ENCODE measurements at regions of chr16 and their contacts with region 1.

Region 1: DNA sequence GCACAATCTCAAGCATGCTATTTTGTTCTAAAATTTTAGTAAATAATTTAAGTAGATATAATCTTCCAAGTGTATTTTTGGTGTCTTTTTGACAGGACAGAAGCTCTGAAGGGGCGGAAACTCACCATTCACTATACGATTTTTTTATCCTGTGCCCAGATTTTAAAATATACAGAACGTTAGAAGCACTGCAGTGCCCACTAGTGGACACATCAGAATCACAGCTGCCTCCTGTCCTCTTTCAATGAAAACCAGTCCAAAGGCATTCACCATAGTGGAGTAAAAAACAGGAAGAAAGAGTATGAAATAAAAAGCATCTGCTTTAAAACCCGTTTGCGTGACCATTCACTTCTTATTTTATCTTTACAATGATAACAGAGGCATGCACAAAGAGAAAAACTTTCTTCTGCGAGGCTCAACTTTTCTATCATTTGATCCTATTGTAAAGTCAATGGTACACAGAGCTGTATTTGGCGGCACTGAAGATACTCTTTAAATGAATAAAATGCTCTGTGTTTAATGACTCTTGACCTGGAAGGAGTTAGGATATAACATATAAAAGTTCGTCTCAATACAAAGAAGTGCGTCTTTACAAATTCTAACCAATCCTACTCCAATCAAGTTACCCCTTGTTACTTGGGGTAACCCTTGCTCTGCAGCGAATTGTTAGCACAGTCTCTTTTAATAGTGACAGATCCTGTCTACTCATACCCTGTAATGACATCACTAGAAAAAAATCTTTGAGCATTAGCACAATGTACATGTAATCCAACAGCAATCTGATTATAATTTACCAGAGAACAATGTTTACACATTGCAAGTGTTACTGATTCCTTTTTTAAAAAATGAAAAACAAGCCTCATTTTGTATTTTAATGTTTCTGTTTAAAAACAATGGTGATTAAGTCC is 339.8 kb upstream of the PSMD7 start:
- DNase-seq: peak; percentile 65
- H3K4me3 Mint-ChIP-seq: no peak overlapping the region
- H3K27ac Mint-ChIP-seq: no peak overlapping the region
- H3K4me1 Mint-ChIP-seq: no peaks in the 10 kb centered on the region
- H3K27me3 Mint-ChIP-seq: peaks cover 88% of the 10 kb centered on the region
- CTCF ChIP-seq: peak; percentile 82

Region 2: GRCh38 chr16:73565262-73565661 is 391.6 kb before region 1 on chr16:
- CTCF ChIA-PET with region 1: interaction called, 12 read pairs
- POLR2A ChIA-PET with region 1: no interaction called
- intact Hi-C with region 1: loop called (anchors 1 kb)
- DNase-seq: peak; percentile 43
- H3K4me3 Mint-ChIP-seq: no peak overlapping the region
- H3K27ac Mint-ChIP-seq: no peak overlapping the region
- H3K4me1 Mint-ChIP-seq: no peaks in the 10 kb centered on the region
- H3K27me3 Mint-ChIP-seq: peaks cover 94% of the 10 kb centered on the region
- CTCF ChIP-seq: peak; percentile 43

Region 3: DNA sequence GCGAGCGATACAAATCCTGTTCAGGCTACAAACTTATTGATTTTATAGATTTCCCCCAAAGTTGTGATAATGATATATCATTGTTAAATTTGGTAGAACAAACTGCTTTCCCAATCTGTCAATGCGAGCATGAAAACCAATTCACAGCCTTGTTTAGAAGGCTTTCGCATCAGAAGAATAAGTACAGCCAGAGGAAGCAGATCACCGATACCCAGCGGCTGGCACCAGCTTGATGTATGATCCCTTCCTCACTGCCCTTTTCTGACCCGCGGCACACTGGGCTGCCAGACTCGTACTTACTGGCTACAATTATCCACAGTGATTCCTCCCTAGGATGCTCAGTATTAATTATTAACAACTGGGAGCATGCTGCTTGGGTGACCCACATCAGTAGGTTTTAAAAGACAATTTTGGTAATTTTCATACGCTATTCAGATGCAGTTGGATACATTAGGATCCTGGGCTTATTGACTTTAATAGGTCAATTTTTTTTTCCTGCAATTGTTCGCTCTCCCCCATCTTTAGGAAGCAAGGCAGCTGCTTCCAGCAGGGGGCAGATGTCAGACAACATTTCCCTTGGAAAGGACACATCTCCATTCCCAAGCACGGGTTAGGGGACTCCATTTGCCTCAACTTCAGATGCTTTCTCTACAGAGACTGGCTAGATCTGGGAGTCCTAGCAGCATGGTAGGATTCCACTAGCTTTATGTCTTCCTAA is 242.9 kb before region 1 on chr16:
- CTCF ChIA-PET with region 1: no interaction called
- POLR2A ChIA-PET with region 1: no interaction called
- intact Hi-C with region 1: loop called (anchors 2 kb)
- DNase-seq: peak; percentile 63
- H3K4me3 Mint-ChIP-seq: no peak overlapping the region
- H3K27ac Mint-ChIP-seq: no peak overlapping the region
- H3K4me1 Mint-ChIP-seq: no peaks in the 10 kb centered on the region
- H3K27me3 Mint-ChIP-seq: peaks cover 98% of the 10 kb centered on the region
- CTCF ChIP-seq: peak; percentile 49

Region 4: DNA sequence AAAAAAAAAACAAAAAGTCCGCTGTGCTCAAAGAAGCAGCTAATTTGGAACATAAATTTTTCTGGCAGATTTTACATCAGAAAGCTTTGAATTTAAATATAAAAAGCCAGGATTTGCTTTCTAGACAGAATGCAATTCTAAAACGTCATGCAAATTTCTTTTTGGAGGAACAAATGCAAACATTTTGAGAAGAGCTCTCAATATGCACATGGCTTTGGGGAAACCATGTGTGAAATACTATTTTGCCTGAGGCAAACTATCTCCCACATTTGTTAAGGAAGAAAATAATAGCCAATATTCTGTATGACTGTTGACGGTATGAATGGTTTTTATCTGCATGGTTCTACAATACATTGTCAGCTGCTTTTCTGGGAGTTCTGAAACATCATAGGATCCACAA is 19.8 kb after region 1 on chr16:
- CTCF ChIA-PET with region 1: interaction called, 12 read pairs
- POLR2A ChIA-PET with region 1: no interaction called
- intact Hi-C with region 1: no loop called
- DNase-seq: no peak
- H3K4me3 Mint-ChIP-seq: no peak overlapping the region
- H3K27ac Mint-ChIP-seq: no peak overlapping the region
- H3K4me1 Mint-ChIP-seq: no peaks in the 10 kb centered on the region
- H3K27me3 Mint-ChIP-seq: peaks cover 100% of the 10 kb centered on the region
- CTCF ChIP-seq: no peak

Region 5: GRCh38 chr16:73993872-73994271 is 37.0 kb after region 1 on chr16:
- CTCF ChIA-PET with region 1: no interaction called
- POLR2A ChIA-PET with region 1: no interaction called
- intact Hi-C with region 1: no loop called
- DNase-seq: no peak
- H3K4me3 Mint-ChIP-seq: no peak overlapping the region
- H3K27ac Mint-ChIP-seq: no peak overlapping the region
- H3K4me1 Mint-ChIP-seq: no peaks in the 10 kb centered on the region
- H3K27me3 Mint-ChIP-seq: peaks cover 51% of the 10 kb centered on the region
- CTCF ChIP-seq: no peak

Region 6: GRCh38 chr16:74226338-74226954 is 269.6 kb after region 1 on chr16:
- CTCF ChIA-PET with region 1: interaction called, 6 read pairs
- POLR2A ChIA-PET with region 1: no interaction called
- intact Hi-C with region 1: loop called (anchors 1 kb)
- DNase-seq: peak; percentile 14
- H3K4me3 Mint-ChIP-seq: no peak overlapping the region
- H3K27ac Mint-ChIP-seq: no peak overlapping the region
- H3K4me1 Mint-ChIP-seq: no peaks in the 10 kb centered on the region
- H3K27me3 Mint-ChIP-seq: peaks cover 49% of the 10 kb centered on the region
- CTCF ChIP-seq: peak; percentile 54

Measured in MCF 10A (cell line).